GM12878 (cell line): ENCODE measurements at regions of chr3 and their contacts with region 1.

Region 1: DNA sequence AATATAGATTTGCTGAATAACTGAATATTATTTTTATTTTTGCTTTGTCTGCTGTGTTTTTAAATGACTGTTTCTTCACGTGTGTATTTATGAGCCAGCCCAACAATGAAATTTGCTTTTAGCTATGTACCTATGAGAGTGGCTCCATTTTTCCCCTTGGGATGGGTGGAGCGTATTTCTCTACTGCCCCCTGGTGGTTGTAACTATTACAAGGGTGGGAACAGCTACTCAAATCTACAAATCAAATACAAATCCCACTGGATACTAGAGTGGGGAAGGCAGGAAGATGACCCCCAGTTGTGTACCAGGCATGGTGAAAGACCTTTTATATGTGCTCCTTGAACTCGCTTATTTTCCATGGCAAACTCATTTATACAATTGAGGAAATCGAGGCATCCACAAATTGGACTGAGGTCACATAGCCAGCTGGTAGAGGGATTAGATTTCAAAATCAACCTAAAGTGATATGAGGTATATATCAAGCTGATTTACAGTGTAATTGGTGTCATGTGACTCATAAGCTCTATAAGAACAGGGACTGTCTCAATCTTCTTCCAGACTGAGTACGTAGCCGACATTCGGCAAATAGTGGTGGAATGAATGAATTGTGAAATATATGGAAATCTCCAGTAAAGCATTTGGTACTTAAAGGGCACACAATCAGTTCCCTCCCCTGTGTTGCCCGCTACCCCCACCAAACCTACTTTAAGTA is 69.5 kb upstream of the VEPH1 start:
- DNase-seq: no peak
- ATAC-seq: peak; percentile 91
- H3K4me3 ChIP-seq: no peak overlapping the region
- H3K27ac ChIP-seq: no peak overlapping the region
- H3K4me1 ChIP-seq: no peaks in the 10 kb centered on the region
- H3K27me3 ChIP-seq: peaks cover 0 to 3% of the 10 kb centered on the region in 2 experiments; a peak in 1 of 4 replicates
- CTCF ChIP-seq: peak; percentile 62 to 68 (median 65)
- EP300 ChIP-seq: no peak
- POLR2A ChIP-seq: no peak
- RAD21 ChIP-seq: peak; percentile 62

Region 2: DNA sequence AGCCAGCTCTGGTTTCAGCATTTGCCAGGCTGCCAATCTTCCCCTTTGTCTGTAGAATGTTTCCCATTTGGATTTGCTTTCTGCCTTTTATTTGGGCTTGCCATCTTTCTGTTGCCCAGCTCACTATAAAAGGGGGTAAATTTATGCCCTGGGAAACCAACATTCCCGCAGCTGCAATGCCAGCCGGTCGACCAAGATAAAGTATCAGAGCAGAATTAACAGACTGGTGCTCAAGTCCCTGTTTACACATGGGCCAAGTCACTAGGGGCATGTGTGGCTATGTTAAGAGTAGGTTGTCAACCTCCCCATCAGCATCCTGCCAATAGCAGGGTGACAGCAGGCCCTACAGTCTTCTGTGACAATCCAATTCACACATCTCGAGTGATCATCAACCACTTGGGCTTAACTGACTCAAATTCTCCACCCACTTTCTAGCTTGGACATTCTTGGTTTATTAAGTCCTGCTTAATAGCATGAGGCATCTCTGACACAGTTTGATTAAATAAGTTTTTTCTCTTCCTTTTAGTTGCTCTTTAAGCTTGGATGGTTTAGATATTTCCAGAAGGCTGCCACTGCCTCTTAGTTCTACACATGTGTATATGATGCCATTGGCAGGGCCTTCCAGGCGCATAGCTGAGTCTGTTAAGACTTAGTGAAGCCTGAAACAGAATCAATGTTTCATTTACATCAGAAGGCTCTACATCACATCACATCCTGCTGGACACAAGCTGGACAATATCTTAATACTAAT is 45.4 kb before region 1 on chr3:
- CTCF ChIA-PET with region 1: interaction called, 181 read pairs
- POLR2A ChIA-PET with region 1: no interaction called
- RAD21 ChIA-PET with region 1: interaction called, 56 read pairs
- SMC1A ChIA-PET with region 1: interaction called, 78 read pairs
- in situ Hi-C with region 1: no loop called
- intact Hi-C with region 1: loop called (anchors 1 kb)
- DNase-seq: no peak
- ATAC-seq: no peak
- H3K4me3 ChIP-seq: no peak overlapping the region
- H3K27ac ChIP-seq: no peak overlapping the region
- H3K4me1 ChIP-seq: no peaks in the 10 kb centered on the region
- H3K27me3 ChIP-seq: no peaks in the 10 kb centered on the region
- CTCF ChIP-seq: no peak
- EP300 ChIP-seq: no peak
- POLR2A ChIP-seq: no peak
- RAD21 ChIP-seq: no peak

Region 3: GRCh38 chr3:157532529-157533297 is 40.0 kb before region 1 on chr3:
- CTCF ChIA-PET with region 1: interaction called, 181 read pairs
- POLR2A ChIA-PET with region 1: no interaction called
- RAD21 ChIA-PET with region 1: interaction called, 56 read pairs
- SMC1A ChIA-PET with region 1: interaction called, 78 read pairs
- in situ Hi-C with region 1: no loop called
- intact Hi-C with region 1: loop called (anchors 1 kb)
- DNase-seq: peak; percentile 9
- ATAC-seq: peak; percentile 95
- H3K4me3 ChIP-seq: no peak overlapping the region
- H3K27ac ChIP-seq: no peak overlapping the region
- H3K4me1 ChIP-seq: no peaks in the 10 kb centered on the region
- H3K27me3 ChIP-seq: no peaks in the 10 kb centered on the region
- CTCF ChIP-seq: peak; percentile 66 to 75 (median 70)
- EP300 ChIP-seq: no peak
- POLR2A ChIP-seq: no peak
- RAD21 ChIP-seq: peak; percentile 85

Region 4: DNA sequence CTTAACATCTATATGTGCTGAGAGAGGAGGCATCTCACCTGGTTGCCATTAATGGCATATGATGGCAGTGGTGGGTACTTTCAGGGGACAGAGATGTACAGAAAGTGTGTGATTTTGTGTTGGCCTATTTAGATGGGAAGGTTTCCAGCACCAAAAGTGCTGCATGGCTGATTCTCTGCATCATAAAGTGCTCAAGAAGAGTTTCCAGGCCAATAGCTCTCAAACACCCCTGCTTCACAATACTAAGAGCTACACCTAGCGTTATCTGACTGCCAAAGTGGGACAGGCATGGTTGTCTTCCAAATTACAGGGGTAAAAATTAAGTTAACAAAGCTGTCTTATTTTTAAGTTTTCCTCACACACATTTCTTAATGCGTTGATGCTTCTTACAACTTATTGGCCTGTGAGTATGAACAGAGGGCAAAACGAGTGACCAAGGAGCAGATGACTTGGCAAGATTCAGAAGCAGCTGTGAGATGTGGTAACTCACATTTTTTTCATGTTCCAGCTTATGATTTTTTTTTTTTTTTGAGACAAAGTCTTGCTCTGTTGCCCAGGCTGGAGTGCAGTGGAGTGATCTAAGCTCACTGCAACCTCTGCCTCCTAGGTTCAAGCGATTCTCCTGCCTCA is 28.1 kb before region 1 on chr3:
- CTCF ChIA-PET with region 1: interaction called, 10 read pairs
- POLR2A ChIA-PET with region 1: no interaction called
- RAD21 ChIA-PET with region 1: no interaction called
- SMC1A ChIA-PET with region 1: interaction called, 3 read pairs
- in situ Hi-C with region 1: no loop called
- intact Hi-C with region 1: no loop called
- DNase-seq: no peak
- ATAC-seq: no peak
- H3K4me3 ChIP-seq: no peak overlapping the region
- H3K27ac ChIP-seq: no peak overlapping the region
- H3K4me1 ChIP-seq: no peaks in the 10 kb centered on the region
- H3K27me3 ChIP-seq: no peaks in the 10 kb centered on the region
- CTCF ChIP-seq: no peak
- EP300 ChIP-seq: no peak
- POLR2A ChIP-seq: no peak
- RAD21 ChIP-seq: no peak

Region 5: DNA sequence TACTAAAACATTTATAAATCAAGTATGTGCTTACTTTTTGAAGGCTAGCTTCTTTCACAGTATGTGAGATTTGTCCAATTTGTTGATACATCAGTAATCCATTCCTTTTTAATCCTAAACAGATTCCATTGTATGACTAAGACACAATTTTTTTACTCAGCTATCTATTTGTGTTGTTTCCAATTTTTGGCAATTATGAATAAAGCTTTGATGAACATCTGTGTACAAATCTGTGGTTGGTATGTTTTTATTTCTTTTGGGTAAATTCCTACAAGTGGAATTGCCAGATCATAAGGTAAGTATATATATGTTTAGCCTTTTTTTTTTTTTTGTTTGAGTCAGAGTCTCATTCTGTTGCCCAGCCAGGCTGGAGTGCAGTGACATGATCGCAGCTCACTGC is 13.3 kb before region 1 on chr3:
- CTCF ChIA-PET with region 1: interaction called, 10 read pairs
- POLR2A ChIA-PET with region 1: no interaction called
- RAD21 ChIA-PET with region 1: no interaction called
- SMC1A ChIA-PET with region 1: interaction called, 3 read pairs
- in situ Hi-C with region 1: no loop called
- intact Hi-C with region 1: no loop called
- DNase-seq: no peak
- ATAC-seq: no peak
- H3K4me3 ChIP-seq: no peak overlapping the region
- H3K27ac ChIP-seq: no peak overlapping the region
- H3K4me1 ChIP-seq: no peaks in the 10 kb centered on the region
- H3K27me3 ChIP-seq: no peaks in the 10 kb centered on the region; a peak in 1 of 4 replicates
- CTCF ChIP-seq: no peak
- EP300 ChIP-seq: no peak
- POLR2A ChIP-seq: no peak
- RAD21 ChIP-seq: no peak

Region 6: GRCh38 chr3:157662171-157662570 is 89.5 kb after region 1 on chr3:
- CTCF ChIA-PET with region 1: no interaction called
- POLR2A ChIA-PET with region 1: no interaction called
- RAD21 ChIA-PET with region 1: no interaction called
- SMC1A ChIA-PET with region 1: no interaction called
- in situ Hi-C with region 1: no loop called
- intact Hi-C with region 1: no loop called
- DNase-seq: no peak
- ATAC-seq: no peak
- H3K4me3 ChIP-seq: no peak overlapping the region
- H3K27ac ChIP-seq: no peak overlapping the region
- H3K4me1 ChIP-seq: no peaks in the 10 kb centered on the region
- H3K27me3 ChIP-seq: no peaks in the 10 kb centered on the region
- CTCF ChIP-seq: no peak
- EP300 ChIP-seq: no peak
- POLR2A ChIP-seq: no peak
- RAD21 ChIP-seq: no peak